Activated T-helper 2 cell treated with anti-CD3 and anti-CD28 coated beads, Interferon-gamma antibody, Interleukin-2, Interleukin-4, amounts not matched to agents 10 μg/mL and 5 μg/mL and 100 μg/mL, durations not matched to agents 14 hours and 24 hours and 36 hours (primary cell): ENCODE measurements at regions of chr3 and their contacts with region 1.

Region 1: DNA sequence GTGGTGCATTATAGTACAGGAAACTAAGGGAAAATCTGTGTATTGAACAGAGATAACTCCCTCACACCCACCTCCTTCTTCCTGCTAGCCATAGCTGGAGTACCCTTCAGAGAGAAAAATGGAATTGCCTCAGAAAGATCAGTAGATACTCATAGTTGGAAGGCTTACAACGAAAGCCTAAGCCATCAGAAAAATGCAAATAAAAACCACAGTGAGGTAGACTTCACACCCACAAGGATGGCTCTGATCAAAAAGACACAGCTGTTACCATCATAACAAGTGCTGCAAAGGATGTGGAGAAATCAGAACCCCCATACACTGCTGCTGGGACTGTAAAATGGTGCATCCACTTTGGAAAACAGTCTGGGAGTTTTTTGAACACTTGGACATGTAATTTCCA is 7.4 kb upstream of the DLG1 start:
- DNase-seq: no peak
- H3K4me3 Mint-ChIP-seq: no peak overlapping the region
- H3K27ac Mint-ChIP-seq: peak overlapping the region; percentile 19
- H3K4me1 Mint-ChIP-seq: peaks cover 28% of the 10 kb centered on the region
- H3K27me3 Mint-ChIP-seq: peaks cover 20% of the 10 kb centered on the region

Region 2: DNA sequence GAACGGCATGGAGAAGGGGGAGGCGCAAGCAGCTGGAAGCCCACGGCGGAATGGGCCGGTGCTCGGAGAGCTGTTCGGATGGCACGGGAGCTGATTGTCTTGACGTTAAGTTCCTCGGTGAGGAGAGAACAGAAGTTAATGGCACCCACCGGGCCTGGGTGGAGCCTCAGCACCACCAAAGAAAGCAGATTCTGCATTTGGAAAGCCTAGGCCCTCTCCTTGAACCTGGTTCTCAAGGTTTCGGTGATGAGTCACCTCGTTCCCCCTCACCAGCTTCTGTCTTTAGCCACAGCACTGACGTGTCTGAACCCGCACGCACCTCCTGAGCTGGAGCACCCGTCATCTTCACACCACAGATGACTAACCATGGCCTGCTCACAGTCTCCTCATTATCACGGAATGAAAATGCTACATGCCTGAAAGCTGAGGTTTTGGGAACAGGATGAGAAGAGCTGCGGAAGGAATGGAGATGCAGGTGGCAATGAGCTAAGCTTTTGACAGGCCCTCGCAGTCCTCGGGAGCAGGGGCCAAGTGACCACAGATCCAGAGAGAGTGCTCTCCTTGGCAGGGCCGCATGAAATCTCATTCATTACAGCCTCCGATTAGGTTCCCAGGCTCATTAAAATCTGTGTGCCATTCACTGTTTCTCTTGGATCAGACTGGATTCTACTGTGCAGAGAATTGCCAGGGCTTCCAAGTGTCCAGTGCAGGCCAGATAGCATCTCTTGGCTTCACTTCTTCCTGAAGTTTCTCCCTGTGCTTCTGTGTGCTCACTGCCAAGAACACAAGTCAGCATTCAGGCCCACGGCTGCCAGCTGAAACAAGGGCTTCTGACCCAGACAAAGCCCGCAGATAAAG is 88.8 kb after region 1 on chr3:
- intact Hi-C with region 1: loop called (anchors 10 kb)
- DNase-seq: peak; percentile 48
- H3K4me3 Mint-ChIP-seq: no peak overlapping the region
- H3K27ac Mint-ChIP-seq: peak overlapping the region; percentile 77
- H3K4me1 Mint-ChIP-seq: peaks cover 19% of the 10 kb centered on the region
- H3K27me3 Mint-ChIP-seq: no peaks in the 10 kb centered on the region